PC-9 (cell line): ENCODE measurements at regions of chr1 and their contacts with region 1.

Region 1: GRCh38 chr1:14910984-14911721 is 242.4 kb upstream of the TMEM51 start:
- DNase-seq: peak; percentile 51 to 74
- H3K4me3 ChIP-seq: no peak overlapping the region
- H3K27ac ChIP-seq: peak overlapping the region; percentile 39; the same call in 1 of the 2 replicates
- H3K4me1 ChIP-seq: peaks cover 7% of the 10 kb centered on the region; the same call in 1 of the 2 replicates
- H3K27me3 ChIP-seq: no peaks in the 10 kb centered on the region
- CTCF ChIP-seq: no peak

Region 2: DNA sequence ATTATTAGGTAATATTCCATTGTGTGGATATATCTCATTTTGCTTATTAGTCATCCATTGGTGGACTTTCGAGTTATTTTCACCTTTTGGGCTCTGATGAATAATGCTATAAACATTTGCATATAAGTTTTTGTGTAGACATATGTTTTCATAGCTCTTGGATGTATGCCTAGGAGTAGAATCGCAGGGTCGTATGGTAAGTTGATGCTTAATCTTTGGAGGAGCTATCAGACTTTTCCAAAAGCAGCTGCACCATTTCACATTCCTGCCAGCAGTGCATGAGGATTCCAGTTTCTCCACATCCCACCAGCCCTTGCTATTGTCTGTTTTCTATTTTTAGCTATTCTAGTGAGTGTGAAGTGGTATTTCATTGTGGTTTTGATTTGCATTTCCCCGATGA is 122.1 kb after region 1 on chr1:
- CTCF ChIA-PET with region 1: interaction called, 12 read pairs
- POLR2A ChIA-PET with region 1: no interaction called
- intact Hi-C with region 1: no loop called
- DNase-seq: no peak
- H3K4me3 ChIP-seq: no peak overlapping the region
- H3K27ac ChIP-seq: no peak overlapping the region
- H3K4me1 ChIP-seq: no peaks in the 10 kb centered on the region
- H3K27me3 ChIP-seq: no peaks in the 10 kb centered on the region
- CTCF ChIP-seq: no peak